H1 (cell line): ENCODE measurements at regions of chr3 and their contacts with region 1.

Region 1: DNA sequence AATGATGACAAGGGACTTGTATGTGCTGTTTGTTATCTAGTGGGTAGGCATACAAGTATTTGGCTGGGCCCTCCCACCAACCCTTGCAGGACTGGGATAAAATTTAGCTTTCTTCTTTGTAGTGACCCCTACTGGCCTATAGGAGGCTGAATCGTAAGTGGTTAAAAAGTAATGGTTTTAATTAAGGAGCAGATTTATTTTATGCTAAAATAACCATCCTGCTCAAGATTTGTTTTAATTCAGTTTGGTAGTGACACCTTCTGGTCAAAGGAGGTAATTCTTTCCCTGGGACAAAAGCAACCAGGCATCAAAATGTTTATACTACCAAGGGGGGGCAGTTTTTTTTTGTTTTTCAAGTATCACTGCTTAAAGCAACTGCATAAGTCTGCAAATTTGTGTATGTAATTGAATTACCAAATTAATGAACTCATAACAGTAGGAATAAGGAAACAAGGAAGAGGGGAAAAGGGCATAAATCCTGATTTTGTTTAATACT is 70.7 kb downstream of the TOP2B start:
- DNase-seq: no peak
- H3K4me3 ChIP-seq: no peak overlapping the region
- H3K27ac ChIP-seq: no peak overlapping the region
- H3K4me1 ChIP-seq: peaks cover 0 to 4% (median 2%) of the 10 kb centered on the region in 4 experiments; a peak in 3 of 7 replicates
- H3K27me3 ChIP-seq: no peaks in the 10 kb centered on the region
- CTCF ChIP-seq: peak in 2 of 3 experiments; percentile 54 to 61; a peak in 2 of 4 replicates
- EP300 ChIP-seq: no peak
- POLR2A ChIP-seq: no peak
- RAD21 ChIP-seq: peak; percentile 66 to 78

Region 2: GRCh38 chr3:24773798-24774197 is 820.3 kb before region 1 on chr3:
- CTCF ChIA-PET with region 1: interaction called, 18 read pairs
- POLR2A ChIA-PET with region 1: no interaction called
- DNase-seq: peak; percentile 10 to 70
- H3K4me3 ChIP-seq: no peak overlapping the region
- H3K27ac ChIP-seq: no peak overlapping the region
- H3K4me1 ChIP-seq: no peaks in the 10 kb centered on the region
- H3K27me3 ChIP-seq: no peaks in the 10 kb centered on the region
- CTCF ChIP-seq: peak; percentile 38 to 85 (median 83)
- EP300 ChIP-seq: no peak
- POLR2A ChIP-seq: no peak
- RAD21 ChIP-seq: peak; percentile 95 to 97

Region 3: DNA sequence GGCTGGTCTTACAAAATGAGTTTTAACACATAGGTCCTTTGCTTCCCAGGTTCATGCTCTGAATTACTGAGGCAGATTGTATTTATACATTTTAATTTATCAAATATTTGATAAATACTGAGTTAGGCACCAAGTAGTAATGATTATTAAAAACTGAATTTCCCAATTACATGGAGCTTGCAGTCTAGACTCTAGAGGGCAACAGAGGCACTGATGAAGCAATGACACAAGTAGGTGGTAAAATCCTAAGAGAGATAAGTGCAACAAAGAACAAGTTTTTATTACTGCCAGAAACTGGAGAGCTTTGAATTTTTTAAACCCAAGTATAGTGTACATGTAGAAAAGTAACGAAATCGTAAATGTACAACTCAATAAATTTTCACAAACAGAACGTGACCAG is 572.2 kb before region 1 on chr3:
- CTCF ChIA-PET with region 1: interaction called, 11 read pairs
- POLR2A ChIA-PET with region 1: no interaction called
- DNase-seq: no peak
- H3K4me3 ChIP-seq: no peak overlapping the region
- H3K27ac ChIP-seq: no peak overlapping the region
- H3K4me1 ChIP-seq: no peaks in the 10 kb centered on the region
- H3K27me3 ChIP-seq: no peaks in the 10 kb centered on the region
- CTCF ChIP-seq: peak in 2 of 3 experiments; percentile 35 to 50; a peak in 2 of 4 replicates
- EP300 ChIP-seq: no peak
- POLR2A ChIP-seq: no peak
- RAD21 ChIP-seq: peak; percentile 60 to 68

Region 4: DNA sequence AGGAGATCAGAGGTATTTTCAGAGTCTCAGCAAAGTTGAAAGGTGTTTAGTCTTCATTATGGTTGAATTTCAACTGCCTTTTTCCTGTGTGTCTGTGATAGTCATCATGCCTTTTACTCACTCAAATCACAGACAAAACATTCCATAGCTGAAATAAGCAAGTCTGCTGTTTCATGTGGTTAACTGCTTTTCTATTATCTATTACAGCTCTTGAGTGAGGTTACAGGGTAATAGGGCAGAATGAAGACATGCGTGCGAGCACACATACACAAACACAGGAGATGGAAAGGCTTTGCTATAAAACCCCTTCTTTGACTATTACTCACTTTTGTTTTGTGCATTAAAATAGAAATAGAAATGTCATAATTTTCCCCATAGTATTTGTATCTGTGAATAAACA is 358.6 kb before region 1 on chr3:
- CTCF ChIA-PET with region 1: no interaction called
- POLR2A ChIA-PET with region 1: no interaction called
- DNase-seq: no peak
- H3K4me3 ChIP-seq: no peak overlapping the region
- H3K27ac ChIP-seq: no peak overlapping the region
- H3K4me1 ChIP-seq: no peaks in the 10 kb centered on the region
- H3K27me3 ChIP-seq: no peaks in the 10 kb centered on the region
- CTCF ChIP-seq: no peak
- EP300 ChIP-seq: no peak
- POLR2A ChIP-seq: no peak
- RAD21 ChIP-seq: no peak

Region 5: GRCh38 chr3:25532431-25533162 is 61.5 kb before region 1 on chr3:
- CTCF ChIA-PET with region 1: interaction called, 12 read pairs
- POLR2A ChIA-PET with region 1: no interaction called
- DNase-seq: peak; percentile 13 to 72
- H3K4me3 ChIP-seq: no peak overlapping the region
- H3K27ac ChIP-seq: no peak overlapping the region
- H3K4me1 ChIP-seq: peaks cover 0 to 3% (median 0%) of the 10 kb centered on the region in 4 experiments; a peak in 1 of 7 replicates
- H3K27me3 ChIP-seq: no peaks in the 10 kb centered on the region
- CTCF ChIP-seq: peak in 2 of 3 experiments; percentile 27 to 65; a peak in 2 of 4 replicates
- EP300 ChIP-seq: no peak
- POLR2A ChIP-seq: no peak
- RAD21 ChIP-seq: peak; percentile 40 to 54; a peak in 3 of 4 replicates

Region 6: GRCh38 chr3:25573386-25574171 is 20.5 kb before region 1 on chr3:
- CTCF ChIA-PET with region 1: interaction called, 138 read pairs
- POLR2A ChIA-PET with region 1: no interaction called
- DNase-seq: no peak
- H3K4me3 ChIP-seq: no peak overlapping the region
- H3K27ac ChIP-seq: no peak overlapping the region
- H3K4me1 ChIP-seq: no peaks in the 10 kb centered on the region; a peak in 1 of 7 replicates
- H3K27me3 ChIP-seq: no peaks in the 10 kb centered on the region
- CTCF ChIP-seq: no peak
- EP300 ChIP-seq: no peak
- POLR2A ChIP-seq: no peak
- RAD21 ChIP-seq: no peak

Region 7: GRCh38 chr3:25604107-25604805 is 10.2 kb after region 1 on chr3:
- CTCF ChIA-PET with region 1: interaction called, 25 read pairs
- POLR2A ChIA-PET with region 1: no interaction called
- DNase-seq: no peak
- H3K4me3 ChIP-seq: no peak overlapping the region
- H3K27ac ChIP-seq: no peak overlapping the region
- H3K4me1 ChIP-seq: no peaks in the 10 kb centered on the region
- H3K27me3 ChIP-seq: no peaks in the 10 kb centered on the region
- CTCF ChIP-seq: no peak
- EP300 ChIP-seq: no peak
- POLR2A ChIP-seq: no peak
- RAD21 ChIP-seq: no peak

Region 8: DNA sequence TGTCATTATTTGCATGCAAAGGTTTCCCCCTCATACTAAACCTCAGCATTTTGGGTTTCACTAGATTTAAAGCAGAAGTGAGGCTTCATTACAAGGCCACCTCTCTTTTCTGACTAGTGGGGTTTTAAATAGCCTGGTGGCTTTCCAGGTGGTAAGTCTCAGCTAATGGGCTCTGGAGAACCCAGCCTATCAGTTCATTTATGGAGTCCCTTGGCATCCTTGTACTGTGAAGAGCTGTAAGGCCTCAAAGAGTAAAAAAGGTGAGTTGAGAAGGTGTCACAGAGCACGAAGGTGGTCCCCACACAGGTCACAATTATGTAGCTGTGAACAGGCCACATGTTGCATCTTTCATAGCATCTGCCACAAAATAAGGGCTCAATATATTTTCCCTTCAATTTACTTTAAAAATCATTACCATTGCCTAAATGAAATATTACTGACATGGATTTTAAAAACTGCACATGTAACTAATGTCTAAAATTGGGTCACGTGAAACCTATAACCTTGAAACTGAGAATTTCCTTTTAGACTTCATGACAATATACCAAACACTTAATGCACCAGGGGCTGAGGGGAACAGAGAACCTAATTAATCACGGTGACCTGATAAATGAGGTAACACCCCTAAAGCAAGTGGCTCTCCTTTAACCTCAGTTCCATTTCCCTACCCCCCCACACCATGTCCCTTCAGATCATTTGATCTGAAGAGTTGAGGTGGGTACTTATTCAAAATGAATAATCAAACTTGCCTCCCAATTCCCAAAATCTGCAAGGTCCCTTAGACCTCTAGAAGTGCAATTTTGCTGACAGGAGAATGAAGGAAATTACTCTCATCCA is 187.9 kb after region 1 on chr3:
- CTCF ChIA-PET with region 1: no interaction called
- POLR2A ChIA-PET with region 1: no interaction called
- DNase-seq: no peak
- H3K4me3 ChIP-seq: peak overlapping the region; percentile 54 to 93 (median 74); a peak in 5 of 8 replicates
- H3K27ac ChIP-seq: no peak overlapping the region
- H3K4me1 ChIP-seq: peaks cover 0 to 5% (median 1%) of the 10 kb centered on the region in 4 experiments; a peak in 2 of 7 replicates
- H3K27me3 ChIP-seq: no peaks in the 10 kb centered on the region; a peak in 2 of 7 replicates
- CTCF ChIP-seq: no peak
- EP300 ChIP-seq: no peak
- POLR2A ChIP-seq: no peak
- RAD21 ChIP-seq: no peak